ENCODE measurements at regions of chr16 and their contacts with region 1.

Region 1: DNA sequence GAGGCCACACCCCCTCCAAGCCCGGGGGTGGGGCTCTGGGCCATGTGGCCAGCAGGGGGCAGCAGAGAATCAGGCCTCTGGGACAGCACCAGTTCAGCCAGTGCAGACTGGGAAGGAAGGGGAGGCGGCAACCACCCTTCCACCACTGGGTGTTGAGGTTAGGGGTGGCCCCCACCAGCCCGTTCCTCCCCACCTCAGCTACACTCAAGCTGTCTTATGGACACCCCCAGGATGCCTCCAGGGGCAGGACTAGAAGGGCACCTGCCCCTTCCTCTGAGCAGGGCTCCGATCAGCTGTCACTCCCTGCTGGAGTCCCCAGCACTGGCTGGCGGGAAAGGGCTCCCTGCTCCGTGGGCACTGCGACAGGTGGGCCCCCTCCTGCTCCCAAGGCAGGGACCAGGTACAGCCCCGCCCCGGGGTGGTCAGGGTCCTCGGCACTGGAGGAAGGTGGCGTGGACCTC is 21.8 kb downstream of the KATNB1 start:
- DNase-seq: peak; percentile 79 to 93 (median 87)
- ATAC-seq: peak; percentile 97
- H3K4me3 ChIP-seq: no peak overlapping the region
- H3K4me3 Mint-ChIP-seq: no peak overlapping the region
- H3K27ac ChIP-seq: peak overlapping the region in 1 of 2 experiments; percentile 14
- H3K27ac Mint-ChIP-seq: no peak overlapping the region
- H3K4me1 ChIP-seq: no peaks in the 10 kb centered on the region
- H3K4me1 Mint-ChIP-seq: no peaks in the 10 kb centered on the region
- H3K27me3 ChIP-seq: no peaks in the 10 kb centered on the region
- H3K27me3 Mint-ChIP-seq: no peaks in the 10 kb centered on the region
- CTCF ChIP-seq: peak; percentile 80

Region 2: DNA sequence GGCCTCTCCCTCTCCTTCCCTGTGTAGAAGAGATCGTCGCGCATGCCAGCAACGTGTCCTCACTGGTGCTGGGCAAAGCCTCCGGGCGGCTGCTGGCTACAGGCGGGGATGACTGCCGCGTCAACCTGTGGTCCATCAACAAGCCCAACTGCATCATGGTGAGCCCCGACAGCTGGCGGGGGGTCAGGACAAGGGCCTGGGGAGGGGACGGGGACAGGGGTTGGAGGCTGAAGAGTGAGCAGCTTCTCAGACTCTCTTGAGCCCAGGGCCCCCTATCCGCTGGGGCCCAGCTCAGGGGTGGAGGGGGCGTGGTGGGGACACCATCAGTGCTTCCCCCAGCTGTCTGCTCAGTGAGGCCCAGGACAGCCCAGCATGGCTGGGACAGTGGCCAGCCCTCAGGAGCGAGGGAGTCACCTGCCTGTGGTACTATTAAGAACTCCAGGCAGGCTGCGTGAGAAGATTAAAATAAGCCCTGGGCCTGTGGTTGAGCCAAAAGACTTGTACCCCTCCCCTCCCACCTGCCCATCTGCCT is 15.6 kb before region 1 on chr16:
- CTCF ChIA-PET with region 1: interaction called, 14 read pairs
- POLR2A ChIA-PET with region 1: no interaction called
- intact Hi-C with region 1: no loop called
- DNase-seq: no peak
- ATAC-seq: no peak
- H3K4me3 ChIP-seq: no peak overlapping the region
- H3K4me3 Mint-ChIP-seq: no peak overlapping the region
- H3K27ac ChIP-seq: no peak overlapping the region
- H3K27ac Mint-ChIP-seq: no peak overlapping the region
- H3K4me1 ChIP-seq: peaks cover 9% of the 10 kb centered on the region
- H3K4me1 Mint-ChIP-seq: peaks cover 12% of the 10 kb centered on the region
- H3K27me3 ChIP-seq: no peaks in the 10 kb centered on the region
- H3K27me3 Mint-ChIP-seq: no peaks in the 10 kb centered on the region
- CTCF ChIP-seq: no peak

Region 3: GRCh38 chr16:57770361-57770760 is 13.0 kb after region 1 on chr16:
- CTCF ChIA-PET with region 1: interaction called, 14 read pairs
- POLR2A ChIA-PET with region 1: no interaction called
- intact Hi-C with region 1: no loop called
- DNase-seq: no peak
- ATAC-seq: no peak
- H3K4me3 ChIP-seq: no peak overlapping the region
- H3K4me3 Mint-ChIP-seq: no peak overlapping the region
- H3K27ac ChIP-seq: no peak overlapping the region
- H3K27ac Mint-ChIP-seq: no peak overlapping the region
- H3K4me1 ChIP-seq: no peaks in the 10 kb centered on the region
- H3K4me1 Mint-ChIP-seq: no peaks in the 10 kb centered on the region
- H3K27me3 ChIP-seq: no peaks in the 10 kb centered on the region
- H3K27me3 Mint-ChIP-seq: no peaks in the 10 kb centered on the region
- CTCF ChIP-seq: no peak

Region 4: GRCh38 chr16:57863434-57864160 is 106.2 kb after region 1 on chr16:
- CTCF ChIA-PET with region 1: interaction called, 4 read pairs
- POLR2A ChIA-PET with region 1: no interaction called
- intact Hi-C with region 1: loop called in 1 of 2 experiments (anchors 1 kb)
- DNase-seq: peak in 2 of 9 experiments; percentile 26 to 33
- ATAC-seq: no peak
- H3K4me3 ChIP-seq: no peak overlapping the region
- H3K4me3 Mint-ChIP-seq: no peak overlapping the region
- H3K27ac ChIP-seq: no peak overlapping the region
- H3K27ac Mint-ChIP-seq: no peak overlapping the region
- H3K4me1 ChIP-seq: no peaks in the 10 kb centered on the region
- H3K4me1 Mint-ChIP-seq: no peaks in the 10 kb centered on the region
- H3K27me3 ChIP-seq: no peaks in the 10 kb centered on the region
- H3K27me3 Mint-ChIP-seq: peaks cover 18% of the 10 kb centered on the region
- CTCF ChIP-seq: no peak

Region 5: GRCh38 chr16:57899771-57900661 is 142.7 kb after region 1 on chr16:
- CTCF ChIA-PET with region 1: no interaction called
- POLR2A ChIA-PET with region 1: no interaction called
- intact Hi-C with region 1: loop called in 1 of 2 experiments (anchors 2 kb)
- DNase-seq: peak; percentile 59 to 89 (median 82)
- ATAC-seq: peak; percentile 76
- H3K4me3 ChIP-seq: no peak overlapping the region
- H3K4me3 Mint-ChIP-seq: no peak overlapping the region
- H3K27ac ChIP-seq: no peak overlapping the region
- H3K27ac Mint-ChIP-seq: no peak overlapping the region
- H3K4me1 ChIP-seq: no peaks in the 10 kb centered on the region
- H3K4me1 Mint-ChIP-seq: peaks cover 3% of the 10 kb centered on the region
- H3K27me3 ChIP-seq: no peaks in the 10 kb centered on the region
- H3K27me3 Mint-ChIP-seq: peaks cover 20% of the 10 kb centered on the region
- CTCF ChIP-seq: peak; percentile 92

Measured in CD8-positive, alpha-beta T cell (primary cell).